ENCODE measurements at regions of chr1 and their contacts with region 1.

Region 1: GRCh38 chr1:176691251-176692228 is 228.6 kb downstream of the PAPPA2 start:
- DNase-seq: peak in 1 of 3 donors; percentile 58
- ATAC-seq: peak; percentile 94 to 99 (median 97)
- H3K4me3 ChIP-seq: no peak overlapping the region
- H3K27ac ChIP-seq: no peak overlapping the region
- H3K4me1 ChIP-seq: no peaks in the 10 kb centered on the region
- H3K27me3 ChIP-seq: no peaks in the 10 kb centered on the region
- CTCF ChIP-seq: peak; percentile 71 to 85 (median 78)
- POLR2A ChIP-seq: no peak

Region 2: DNA sequence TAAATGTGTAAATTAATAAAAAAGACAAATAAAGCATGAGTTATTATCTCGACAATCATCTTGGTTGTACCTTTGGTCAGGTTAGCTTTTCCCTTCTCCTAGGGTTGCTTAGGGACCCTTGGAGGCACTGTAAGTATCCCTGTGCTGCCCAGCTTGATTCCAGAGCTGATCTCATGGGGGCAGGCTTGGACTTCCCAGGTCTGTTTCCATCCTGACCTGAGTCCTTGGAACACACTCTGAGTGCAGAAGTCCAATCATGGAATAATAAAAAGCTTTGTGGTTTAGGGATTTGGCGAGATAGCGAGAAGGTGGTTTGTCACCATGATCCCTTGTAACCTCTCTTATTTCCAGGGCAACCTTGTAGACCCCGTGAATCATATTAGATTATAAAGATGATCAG is 247.3 kb before region 1 on chr1:
- intact Hi-C with region 1: loop called in 1 of 2 experiments (anchors 5 kb)
- DNase-seq: peak; percentile 33 to 57 (median 56)
- ATAC-seq: peak; percentile 98 to 99 (median 99)
- H3K4me3 ChIP-seq: no peak overlapping the region
- H3K27ac ChIP-seq: no peak overlapping the region
- H3K4me1 ChIP-seq: peaks cover 0 to 4% (median 0%) of the 10 kb centered on the region in 4 donors
- H3K27me3 ChIP-seq: no peaks in the 10 kb centered on the region
- CTCF ChIP-seq: peak; percentile 46 to 74 (median 62)
- POLR2A ChIP-seq: no peak

Region 3: DNA sequence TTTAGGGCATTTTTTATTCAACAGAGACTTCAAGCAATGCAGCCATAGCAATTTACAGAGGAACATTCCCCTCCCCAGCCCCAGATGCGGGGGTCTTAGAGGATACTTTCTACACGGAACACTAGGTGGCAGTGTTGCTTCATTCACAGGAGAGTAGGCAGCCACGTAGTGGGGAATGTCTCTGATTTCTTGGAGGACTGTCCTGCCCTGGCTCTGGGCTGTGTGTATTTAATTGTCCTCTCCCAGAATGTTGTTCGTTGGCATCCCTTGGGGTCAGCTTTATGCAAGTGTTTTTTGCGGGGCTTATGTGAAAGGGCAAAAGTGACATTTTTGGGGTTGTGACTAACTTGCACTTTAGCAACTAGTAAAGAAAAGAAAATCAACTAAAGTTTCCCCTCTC is 131.7 kb before region 1 on chr1:
- intact Hi-C with region 1: loop called in 1 of 2 experiments (anchors 5 kb)
- DNase-seq: peak in 1 of 3 donors; percentile 50
- ATAC-seq: peak; percentile 79 to 81 (median 80)
- H3K4me3 ChIP-seq: no peak overlapping the region
- H3K27ac ChIP-seq: no peak overlapping the region
- H3K4me1 ChIP-seq: peaks cover 0 to 35% (median 6%) of the 10 kb centered on the region in 4 donors
- H3K27me3 ChIP-seq: no peaks in the 10 kb centered on the region
- CTCF ChIP-seq: peak; percentile 78 to 90 (median 84)
- POLR2A ChIP-seq: no peak

Region 4: GRCh38 chr1:176638713-176639526 is 52.6 kb before region 1 on chr1:
- intact Hi-C with region 1: no loop called
- DNase-seq: no peak
- ATAC-seq: no peak
- H3K4me3 ChIP-seq: no peak overlapping the region
- H3K27ac ChIP-seq: no peak overlapping the region
- H3K4me1 ChIP-seq: no peaks in the 10 kb centered on the region
- H3K27me3 ChIP-seq: no peaks in the 10 kb centered on the region
- CTCF ChIP-seq: no peak
- POLR2A ChIP-seq: no peak

Measured in right lobe of liver (tissue), 6 donors.